ENCODE measurements at regions of chr4 and their contacts with region 1.

Region 1: DNA sequence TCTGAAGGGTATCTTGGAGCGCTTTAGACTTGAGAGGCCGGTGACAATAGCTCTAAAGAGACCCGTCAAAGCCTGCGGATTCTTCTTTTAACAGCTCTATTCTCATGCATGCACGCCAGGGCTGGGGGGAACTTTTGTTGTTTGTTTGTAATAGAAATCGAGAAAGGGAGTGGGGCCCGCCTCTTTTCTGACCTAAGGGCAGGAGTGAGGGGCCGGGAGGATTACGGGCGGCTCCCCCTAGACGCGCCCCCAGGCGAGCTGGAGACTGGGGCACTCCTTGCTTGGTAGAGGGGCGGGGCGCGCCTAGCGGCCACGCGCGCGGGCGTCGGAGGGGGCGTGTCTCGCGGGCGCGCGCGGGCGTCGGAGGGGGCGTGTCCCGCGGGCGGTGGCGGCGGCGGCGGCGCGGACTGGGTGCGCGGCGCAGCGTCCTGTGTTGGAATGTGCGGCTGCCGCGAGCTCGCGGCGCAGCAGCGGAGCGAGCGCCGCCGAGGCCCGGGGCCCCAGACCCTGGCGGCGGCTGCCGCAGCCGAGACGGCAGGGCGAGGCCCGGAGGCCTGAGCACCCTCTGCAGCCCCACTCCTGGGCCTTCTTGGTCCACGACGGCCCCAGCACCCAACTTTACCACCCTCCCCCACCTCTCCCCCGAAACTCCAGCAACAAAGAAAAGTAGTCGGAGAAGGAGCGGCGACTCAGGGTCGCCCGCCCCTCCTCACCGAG is at the start of gene REST:
- DNase-seq: peak; percentile 73 to 84
- ATAC-seq: peak; percentile 74 to 90 (median 86)
- H3K4me3 ChIP-seq: peak within 1 kb of the TSS; percentile 63 to 99 (median 94)
- H3K27ac ChIP-seq: peak within 1 kb of the TSS; percentile 53 to 96 (median 92)
- H3K4me1 ChIP-seq: peaks cover 3 to 43% (median 39%) of the 10 kb centered on the region in 9 donors
- H3K27me3 ChIP-seq: no peaks in the 10 kb centered on the region
- CTCF ChIP-seq: no peak
- total RNA-seq, gene REST: 22.4 to 36.8 (median 28.6) TPM

Region 2: DNA sequence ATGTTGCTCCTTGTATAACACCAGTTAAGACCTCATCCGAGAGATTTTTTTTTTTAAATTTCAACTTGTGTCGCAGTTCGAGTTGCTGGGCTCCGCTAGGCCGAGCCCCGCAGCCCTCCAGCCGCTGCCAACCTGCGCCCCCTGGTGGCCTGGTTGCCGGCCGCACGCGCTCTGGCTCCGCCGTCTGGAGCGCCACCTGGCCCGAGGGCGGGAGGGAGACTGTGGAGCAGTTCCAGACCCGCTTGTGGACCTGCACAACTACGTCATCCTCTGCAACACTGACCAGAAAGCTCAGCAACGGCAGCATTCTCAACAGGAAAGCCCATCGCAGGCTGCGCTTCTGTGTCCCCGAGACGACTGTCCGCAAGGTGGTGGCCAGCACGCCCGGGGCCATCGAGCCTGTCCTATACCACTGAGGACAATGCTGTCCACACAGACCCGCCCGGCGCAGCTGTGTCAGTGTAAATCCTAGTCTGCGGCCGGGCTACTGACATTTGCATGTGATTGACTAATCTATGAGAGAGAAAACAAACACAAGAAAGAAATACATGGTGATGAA is 363.0 kb before region 1 on chr4:
- intact Hi-C with region 1: no loop called
- DNase-seq: peak; percentile 80 to 88
- ATAC-seq: peak; percentile 96 to 100 (median 99)
- H3K4me3 ChIP-seq: peak overlapping the region in 9 of 10 donors; percentile 18 to 47 (median 43)
- H3K27ac ChIP-seq: no peak overlapping the region
- H3K4me1 ChIP-seq: peaks cover 0 to 5% (median 0%) of the 10 kb centered on the region in 9 donors
- H3K27me3 ChIP-seq: peaks cover 0 to 18% (median 0%) of the 10 kb centered on the region in 7 donors
- CTCF ChIP-seq: peak; percentile 93 to 100 (median 99)

Region 3: DNA sequence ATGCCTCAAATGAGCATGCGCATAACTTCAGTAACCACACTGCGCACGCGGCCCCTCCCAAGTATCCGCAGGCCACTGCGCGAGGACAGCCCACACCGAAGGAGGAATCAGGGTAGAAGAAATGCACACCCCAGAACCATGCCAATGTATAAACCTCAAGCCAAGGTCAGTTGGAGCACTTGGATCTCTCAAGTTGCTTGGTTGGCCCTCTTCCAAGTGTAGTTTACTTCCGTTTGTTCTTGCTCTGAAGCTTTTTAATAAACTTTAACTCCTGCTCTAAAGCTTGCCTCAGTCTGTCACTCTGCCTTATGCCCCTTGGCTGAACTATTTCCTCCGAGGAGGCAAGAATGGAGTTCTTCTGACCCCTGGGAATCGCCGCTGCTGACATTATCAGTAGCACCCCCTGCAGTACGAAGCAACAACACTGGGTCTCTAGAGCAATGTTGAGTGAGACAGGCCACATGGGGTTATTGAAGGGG is 64.2 kb before region 1 on chr4:
- intact Hi-C with region 1: no loop called
- DNase-seq: no peak
- ATAC-seq: peak in 2 of 8 donors; percentile 16 to 21
- H3K4me3 ChIP-seq: no peak overlapping the region
- H3K27ac ChIP-seq: no peak overlapping the region
- H3K4me1 ChIP-seq: no peaks in the 10 kb centered on the region
- H3K27me3 ChIP-seq: no peaks in the 10 kb centered on the region
- CTCF ChIP-seq: no peak

Region 4: GRCh38 chr4:56940971-56941370 is 33.3 kb after region 1 on chr4:
- intact Hi-C with region 1: loop called in 1 of 10 experiments (anchors 1 kb)
- DNase-seq: no peak
- ATAC-seq: no peak
- H3K4me3 ChIP-seq: no peak overlapping the region
- H3K27ac ChIP-seq: no peak overlapping the region
- H3K4me1 ChIP-seq: peaks cover 0 to 6% (median 0%) of the 10 kb centered on the region in 9 donors
- H3K27me3 ChIP-seq: no peaks in the 10 kb centered on the region
- CTCF ChIP-seq: no peak

Region 5: DNA sequence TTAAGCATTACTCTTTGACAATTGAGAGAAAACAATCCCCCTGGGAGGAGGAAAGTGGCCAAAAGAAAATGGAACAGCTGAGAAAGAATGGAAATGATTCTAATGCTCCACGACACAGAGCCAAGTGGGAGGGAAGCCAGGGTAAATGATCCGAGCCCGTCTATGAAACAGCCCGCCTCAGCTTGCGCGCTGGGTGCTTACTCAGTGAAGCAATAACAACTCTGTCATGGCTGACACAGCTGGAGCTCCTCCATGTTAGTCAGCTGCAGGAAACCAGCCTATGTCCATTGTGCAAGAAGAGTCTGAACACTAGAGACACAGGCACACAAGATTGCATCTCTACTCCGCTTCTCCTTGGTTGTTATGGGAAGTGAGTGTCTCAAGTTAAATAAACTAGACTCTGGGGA is 50.5 kb after region 1 on chr4:
- intact Hi-C with region 1: loop called in 1 of 10 experiments (anchors 5 kb)
- DNase-seq: peak; percentile 76 to 86
- ATAC-seq: peak; percentile 90 to 99 (median 96)
- H3K4me3 ChIP-seq: peak overlapping the region in 4 of 10 donors; percentile 8 to 21 (median 16)
- H3K27ac ChIP-seq: peak overlapping the region in 6 of 10 donors; percentile 17 to 60 (median 40)
- H3K4me1 ChIP-seq: peaks cover 0 to 17% (median 7%) of the 10 kb centered on the region in 9 donors
- H3K27me3 ChIP-seq: no peaks in the 10 kb centered on the region
- CTCF ChIP-seq: no peak

Region 6: GRCh38 chr4:56977321-56978012 is 69.8 kb after region 1 on chr4 and contains the start of gene NOA1:
- intact Hi-C with region 1: loop called in 5 of 10 experiments (anchors 5 kb)
- DNase-seq: peak; percentile 98
- ATAC-seq: peak; percentile 91 to 95 (median 93)
- H3K4me3 ChIP-seq: peak within 1 kb of the TSS; percentile 69 to 98 (median 83)
- H3K27ac ChIP-seq: peak within 1 kb of the TSS; percentile 68 to 94 (median 89)
- H3K4me1 ChIP-seq: peaks cover 0 to 63% (median 53%) of the 10 kb centered on the region in 9 donors
- H3K27me3 ChIP-seq: no peaks in the 10 kb centered on the region
- CTCF ChIP-seq: no peak
- total RNA-seq, gene NOA1: 11.0 to 14.7 (median 12.6) TPM

Region 7: GRCh38 chr4:57094832-57095223 is 187.2 kb after region 1 on chr4:
- intact Hi-C with region 1: no loop called
- DNase-seq: no peak
- ATAC-seq: peak in 2 of 8 donors; percentile 3 to 21
- H3K4me3 ChIP-seq: no peak overlapping the region
- H3K27ac ChIP-seq: peak overlapping the region; percentile 24 to 100 (median 53)
- H3K4me1 ChIP-seq: peaks cover 32 to 100% (median 98%) of the 10 kb centered on the region in 9 donors
- H3K27me3 ChIP-seq: no peaks in the 10 kb centered on the region
- CTCF ChIP-seq: no peak

Measured in heart right ventricle (tissue), 16 donors.